ENCODE measurements at regions of chr19 and their contacts with region 1.

Region 1: DNA sequence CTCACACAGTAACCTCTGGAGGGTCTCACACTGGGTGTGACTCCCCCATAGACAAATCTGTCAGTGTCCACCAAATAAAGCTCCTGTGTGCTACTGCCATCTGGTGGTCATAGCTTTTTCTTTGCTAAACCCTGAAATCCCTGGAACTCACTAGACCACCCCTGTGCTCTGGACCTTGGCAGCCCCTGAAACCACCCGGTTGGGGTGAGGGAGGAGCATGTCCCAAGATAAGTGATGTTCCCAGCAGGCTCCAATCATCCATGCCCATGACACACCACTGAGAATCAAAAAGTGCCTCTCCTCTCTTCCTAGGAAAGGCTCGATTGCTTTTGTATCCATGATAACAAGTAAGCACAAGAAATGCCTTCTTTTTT is 6.5 kb upstream of the HSD17B14 start:
- DNase-seq: no peak
- H3K4me3 ChIP-seq: no peak overlapping the region
- H3K27me3 ChIP-seq: no peaks in the 10 kb centered on the region
- CTCF ChIP-seq: peak; percentile 79

Region 2: DNA sequence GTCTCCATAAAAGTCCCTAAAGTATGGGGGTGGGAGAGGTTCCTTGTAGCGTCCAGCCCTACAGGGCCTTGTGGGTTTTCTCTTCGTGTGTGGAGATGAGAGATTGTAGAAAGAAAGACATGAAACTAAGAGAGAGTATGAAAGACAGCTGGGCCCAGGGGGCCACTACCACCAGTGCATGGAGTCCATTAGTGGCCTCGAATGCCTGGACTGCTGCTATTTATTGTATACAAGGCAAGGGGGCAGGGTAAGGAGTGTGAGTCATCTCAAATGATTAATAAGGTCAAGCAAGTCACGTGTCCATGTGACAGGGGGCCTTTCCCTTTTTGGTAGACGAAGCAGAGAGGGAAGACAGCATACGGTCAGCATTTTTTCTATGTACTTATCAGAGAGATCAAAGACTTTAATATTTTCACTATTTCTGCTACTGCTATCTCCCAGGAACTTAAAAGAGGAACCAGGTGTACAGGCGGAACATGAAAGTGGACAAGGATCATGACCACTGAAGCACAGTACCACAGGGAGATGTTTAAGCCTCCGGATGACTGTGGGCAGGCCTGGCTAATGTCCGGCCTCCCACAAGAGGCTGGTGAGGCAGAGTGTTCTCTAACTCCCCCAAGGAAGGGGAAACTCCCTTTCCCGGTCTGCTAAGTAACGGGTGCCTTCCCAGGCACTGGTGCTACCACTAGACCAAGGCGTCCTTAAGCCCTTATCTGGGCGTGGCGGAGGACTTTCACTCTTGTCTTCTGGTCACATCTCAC is 62.0 kb before region 1 on chr19:
- CTCF ChIA-PET with region 1: interaction called, 18 read pairs
- POLR2A ChIA-PET with region 1: no interaction called
- DNase-seq: no peak
- H3K4me3 ChIP-seq: no peak overlapping the region
- H3K27me3 ChIP-seq: no peaks in the 10 kb centered on the region
- CTCF ChIP-seq: no peak

Region 3: DNA sequence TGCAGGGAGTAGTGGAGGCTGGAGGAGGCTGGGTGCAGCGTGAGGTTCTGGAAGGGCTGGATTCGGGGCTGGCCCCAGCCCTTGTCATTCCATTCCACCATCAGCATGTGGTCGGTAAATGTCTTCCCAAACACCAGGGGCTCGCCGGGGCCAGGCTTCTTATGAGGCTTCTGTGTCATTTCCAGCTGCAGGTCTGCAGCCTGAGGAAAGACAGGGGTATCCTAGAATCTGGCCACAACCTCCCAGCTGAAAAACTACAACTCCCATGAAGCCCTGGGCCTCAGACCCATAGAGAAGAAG is 36.3 kb before region 1 on chr19:
- CTCF ChIA-PET with region 1: interaction called, 13 read pairs
- POLR2A ChIA-PET with region 1: no interaction called
- DNase-seq: no peak
- H3K4me3 ChIP-seq: no peak overlapping the region
- H3K27me3 ChIP-seq: no peaks in the 10 kb centered on the region
- CTCF ChIP-seq: no peak

Region 4: GRCh38 chr19:48826606-48827020 is 16.2 kb before region 1 on chr19:
- CTCF ChIA-PET with region 1: interaction called, 10 read pairs
- POLR2A ChIA-PET with region 1: no interaction called
- DNase-seq: no peak
- H3K4me3 ChIP-seq: no peak overlapping the region
- H3K27me3 ChIP-seq: no peaks in the 10 kb centered on the region
- CTCF ChIP-seq: no peak

Region 5: DNA sequence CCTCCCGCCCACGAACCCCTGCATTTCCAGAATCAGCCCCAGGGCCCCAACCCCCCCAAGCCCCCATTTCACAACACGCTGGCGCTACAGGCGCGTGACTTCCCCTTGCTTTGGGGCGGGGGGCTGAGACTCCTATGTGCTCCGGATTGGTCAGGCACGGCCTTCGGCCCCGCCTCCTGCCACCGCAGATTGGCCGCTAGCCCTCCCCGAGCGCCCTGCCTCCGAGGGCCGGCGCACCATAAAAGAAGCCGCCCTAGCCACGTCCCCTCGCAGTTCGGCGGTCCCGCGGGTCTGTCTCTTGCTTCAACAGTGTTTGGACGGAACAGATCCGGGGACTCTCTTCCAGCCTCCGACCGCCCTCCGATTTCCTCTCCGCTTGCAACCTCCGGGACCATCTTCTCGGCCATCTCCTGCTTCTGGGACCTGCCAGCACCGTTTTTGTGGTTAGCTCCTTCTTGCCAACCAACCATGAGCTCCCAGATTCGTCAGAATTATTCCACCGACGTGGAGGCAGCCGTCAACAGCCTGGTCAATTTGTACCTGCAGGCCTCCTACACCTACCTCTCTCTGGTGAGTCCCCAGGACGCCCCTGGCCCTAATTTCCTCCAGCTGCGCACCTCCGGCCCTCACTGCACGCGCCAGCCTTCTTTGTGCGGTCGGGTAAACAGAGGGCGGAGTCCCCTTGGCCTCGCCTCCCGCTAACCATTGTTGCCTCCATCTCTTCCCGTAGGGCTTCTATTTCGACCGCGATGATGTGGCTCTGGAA is 122.4 kb after region 1 on chr19 and contains the start of gene FTL:
- CTCF ChIA-PET with region 1: interaction called, 31 read pairs
- POLR2A ChIA-PET with region 1: interaction called, 3 read pairs
- DNase-seq: peak; percentile 75
- H3K4me3 ChIP-seq: peak within 1 kb of the TSS; percentile 78
- H3K27me3 ChIP-seq: no peaks in the 10 kb centered on the region
- CTCF ChIP-seq: no peak
- polyA plus RNA-seq, gene FTL: 2,664 and 3,340 TPM in 2 replicates